ENCODE measurements at regions of chr10 and their contacts with region 1.

Region 1: GRCh38 chr10:92848441-92849233 is at the start of gene EXOC6:
- DNase-seq: peak; percentile 67 to 79 (median 77)
- H3K4me3 ChIP-seq: peak within 1 kb of the TSS; percentile 67 to 95 (median 72)
- H3K4me3 Mint-ChIP-seq: peak within 1 kb of the TSS; percentile 92 to 93
- H3K27ac ChIP-seq: peak within 1 kb of the TSS; percentile 53 to 86
- H3K27ac Mint-ChIP-seq: peak within 1 kb of the TSS; percentile 80 to 95 (median 91)
- H3K4me1 ChIP-seq: peaks cover 52 to 58% of the 10 kb centered on the region in 2 donors
- H3K4me1 Mint-ChIP-seq: peaks cover 52% of the 10 kb centered on the region
- H3K27me3 ChIP-seq: no peaks in the 10 kb centered on the region
- H3K27me3 Mint-ChIP-seq: no peaks in the 10 kb centered on the region
- CTCF ChIP-seq: peak; percentile 33
- polyA plus RNA-seq, gene EXOC6: 7.5 to 9.6 (median 8.3) TPM

Region 2: GRCh38 chr10:92592761-92593618 is 255.6 kb before region 1 on chr10 and contains the start of gene KIF11:
- intact Hi-C with region 1: loop called in 1 of 2 experiments (anchors 10 kb)
- DNase-seq: peak; percentile 89 to 97 (median 91)
- H3K4me3 ChIP-seq: peak within 1 kb of the TSS; percentile 63 to 99 (median 72)
- H3K4me3 Mint-ChIP-seq: peak within 1 kb of the TSS; percentile 91 to 95
- H3K27ac ChIP-seq: peak within 1 kb of the TSS; percentile 93 to 97
- H3K27ac Mint-ChIP-seq: peak within 1 kb of the TSS; percentile 94 to 99 (median 97)
- H3K4me1 ChIP-seq: peaks cover 40 to 46% of the 10 kb centered on the region in 2 donors
- H3K4me1 Mint-ChIP-seq: peaks cover 52% of the 10 kb centered on the region
- H3K27me3 ChIP-seq: no peaks in the 10 kb centered on the region
- H3K27me3 Mint-ChIP-seq: peaks cover 0 to 3% (median 1%) of the 10 kb centered on the region in 3 donors
- CTCF ChIP-seq: no peak
- polyA plus RNA-seq, gene KIF11: 0.07 to 0.55 (median 0.40) TPM

Region 3: DNA sequence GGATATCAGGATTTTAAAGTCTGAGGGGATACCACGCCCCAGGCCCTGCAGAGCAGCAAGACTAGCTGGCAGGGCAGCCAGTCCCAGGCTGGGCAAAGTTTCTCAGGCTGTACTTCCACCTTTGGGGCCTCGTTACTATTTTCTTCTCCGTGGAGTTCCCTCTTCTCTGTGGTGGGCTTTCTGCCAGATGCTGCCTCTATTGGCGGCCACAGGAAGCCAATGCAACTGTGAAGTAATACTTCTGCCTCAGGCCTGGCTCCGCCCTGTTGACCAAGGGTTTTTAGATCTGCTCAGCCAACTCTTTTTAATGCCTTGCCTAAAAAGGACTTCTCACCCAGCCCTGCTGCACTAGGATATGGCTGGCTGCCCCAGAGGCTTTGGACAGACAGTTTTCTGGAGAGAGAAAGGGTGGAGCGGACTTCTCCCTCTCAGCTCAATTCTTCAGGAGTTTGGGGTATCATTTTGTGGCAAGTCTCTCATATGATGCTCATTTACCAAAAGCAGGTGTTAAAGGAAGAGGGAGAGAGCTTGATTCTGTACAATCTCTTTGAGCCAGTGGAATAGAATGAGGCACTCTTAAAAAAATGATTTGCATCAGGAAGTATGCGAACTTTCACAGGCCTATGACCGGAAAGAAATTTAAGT is 91.4 kb before region 1 on chr10:
- intact Hi-C with region 1: loop called in 1 of 2 experiments (anchors 5 kb)
- DNase-seq: peak; percentile 84 to 95 (median 90)
- H3K4me3 ChIP-seq: peak overlapping the region in 1 of 3 experiments; percentile 65
- H3K4me3 Mint-ChIP-seq: peak overlapping the region; percentile 72 to 90
- H3K27ac ChIP-seq: peak overlapping the region; percentile 58 to 82
- H3K27ac Mint-ChIP-seq: peak overlapping the region; percentile 82 to 98 (median 95)
- H3K4me1 ChIP-seq: peaks cover 86 to 90% of the 10 kb centered on the region in 2 donors
- H3K4me1 Mint-ChIP-seq: peaks cover 86% of the 10 kb centered on the region
- H3K27me3 ChIP-seq: no peaks in the 10 kb centered on the region
- H3K27me3 Mint-ChIP-seq: peaks cover 0 to 3% (median 0%) of the 10 kb centered on the region in 3 donors
- CTCF ChIP-seq: no peak

Region 4: DNA sequence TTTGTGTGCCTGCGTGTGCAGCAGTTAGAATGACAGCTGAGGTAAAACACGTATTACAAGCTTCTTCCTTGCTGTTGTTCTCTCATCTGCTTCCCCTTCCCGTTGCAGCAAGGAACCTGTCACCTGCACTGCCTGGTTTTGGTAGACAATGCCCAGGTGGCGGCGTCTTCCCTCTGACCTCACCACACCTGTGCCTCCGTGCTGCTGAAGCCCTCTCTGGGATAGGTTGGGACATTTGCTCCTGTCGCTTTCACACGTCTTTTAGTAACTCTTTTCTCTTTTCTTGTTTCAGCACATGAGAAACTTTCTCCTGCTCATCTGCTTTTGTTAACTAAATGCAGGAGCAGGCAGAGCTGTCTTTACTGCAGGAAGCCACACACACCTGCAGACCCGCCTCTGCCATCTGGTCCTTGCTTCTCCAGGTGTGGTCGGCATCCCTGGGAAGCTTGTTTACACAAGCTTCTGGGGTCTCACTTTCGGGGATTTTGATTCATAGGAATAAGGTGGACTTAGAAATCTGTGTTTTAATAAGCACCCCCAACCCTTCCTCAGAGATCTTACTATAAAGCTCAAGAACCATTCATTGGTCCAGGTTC is 61.0 kb before region 1 on chr10:
- intact Hi-C with region 1: no loop called
- DNase-seq: no peak
- H3K4me3 ChIP-seq: no peak overlapping the region
- H3K4me3 Mint-ChIP-seq: peak overlapping the region in 1 of 2 donors; percentile 27
- H3K27ac ChIP-seq: no peak overlapping the region
- H3K27ac Mint-ChIP-seq: no peak overlapping the region
- H3K4me1 ChIP-seq: peaks cover 30 to 37% of the 10 kb centered on the region in 2 donors
- H3K4me1 Mint-ChIP-seq: peaks cover 35% of the 10 kb centered on the region
- H3K27me3 ChIP-seq: no peaks in the 10 kb centered on the region
- H3K27me3 Mint-ChIP-seq: peaks cover 0 to 2% (median 0%) of the 10 kb centered on the region in 3 donors
- CTCF ChIP-seq: no peak

Region 5: GRCh38 chr10:92810934-92811532 is 37.6 kb before region 1 on chr10:
- intact Hi-C with region 1: no loop called
- DNase-seq: no peak
- H3K4me3 ChIP-seq: no peak overlapping the region
- H3K4me3 Mint-ChIP-seq: no peak overlapping the region
- H3K27ac ChIP-seq: no peak overlapping the region
- H3K27ac Mint-ChIP-seq: no peak overlapping the region
- H3K4me1 ChIP-seq: no peaks in the 10 kb centered on the region
- H3K4me1 Mint-ChIP-seq: peaks cover 8% of the 10 kb centered on the region
- H3K27me3 ChIP-seq: no peaks in the 10 kb centered on the region
- H3K27me3 Mint-ChIP-seq: peaks cover 0 to 4% (median 0%) of the 10 kb centered on the region in 3 donors
- CTCF ChIP-seq: no peak

Region 6: DNA sequence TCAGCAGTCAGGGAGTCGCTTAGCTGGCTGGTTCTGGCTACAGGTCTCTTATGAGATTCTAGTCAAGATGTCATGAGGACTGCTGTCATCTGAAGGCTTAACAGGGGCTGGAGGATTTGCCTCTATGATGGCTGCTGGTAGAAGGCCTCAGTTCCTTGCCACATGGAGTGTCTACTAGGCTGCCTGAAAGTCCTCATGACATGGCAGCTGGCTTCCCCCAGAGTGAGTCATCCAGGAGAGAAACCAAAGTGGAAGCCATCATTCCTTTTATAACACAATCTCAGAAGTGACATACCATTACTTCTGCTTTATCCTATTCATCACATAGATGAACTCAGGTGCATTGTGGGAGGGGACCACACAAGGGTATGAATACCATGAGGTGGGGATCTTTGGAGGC is 74.8 kb after region 1 on chr10:
- intact Hi-C with region 1: no loop called
- DNase-seq: peak in 1 of 3 donors; percentile 11
- H3K4me3 ChIP-seq: no peak overlapping the region
- H3K4me3 Mint-ChIP-seq: no peak overlapping the region
- H3K27ac ChIP-seq: peak overlapping the region in 1 of 2 donors; percentile 11
- H3K27ac Mint-ChIP-seq: peak overlapping the region in 4 of 7 donors; percentile 34 to 73 (median 37)
- H3K4me1 ChIP-seq: no peaks in the 10 kb centered on the region
- H3K4me1 Mint-ChIP-seq: no peaks in the 10 kb centered on the region
- H3K27me3 ChIP-seq: no peaks in the 10 kb centered on the region
- H3K27me3 Mint-ChIP-seq: peaks cover 0 to 2% (median 0%) of the 10 kb centered on the region in 3 donors
- CTCF ChIP-seq: no peak